ENCODE measurements at regions of chr10 and their contacts with region 1.

Region 1: GRCh38 chr10:102420810-102421644 is at the start of gene FBXL15:
- DNase-seq: peak; percentile 99
- H3K4me3 Mint-ChIP-seq: peak within 1 kb of the TSS; percentile 96
- H3K27ac Mint-ChIP-seq: peak within 1 kb of the TSS; percentile 95
- H3K4me1 Mint-ChIP-seq: peaks cover 26% of the 10 kb centered on the region
- H3K27me3 Mint-ChIP-seq: peaks cover 20% of the 10 kb centered on the region
- total RNA-seq, gene FBXL15: 14.0 and 16.4 TPM in 2 replicates

Region 2: DNA sequence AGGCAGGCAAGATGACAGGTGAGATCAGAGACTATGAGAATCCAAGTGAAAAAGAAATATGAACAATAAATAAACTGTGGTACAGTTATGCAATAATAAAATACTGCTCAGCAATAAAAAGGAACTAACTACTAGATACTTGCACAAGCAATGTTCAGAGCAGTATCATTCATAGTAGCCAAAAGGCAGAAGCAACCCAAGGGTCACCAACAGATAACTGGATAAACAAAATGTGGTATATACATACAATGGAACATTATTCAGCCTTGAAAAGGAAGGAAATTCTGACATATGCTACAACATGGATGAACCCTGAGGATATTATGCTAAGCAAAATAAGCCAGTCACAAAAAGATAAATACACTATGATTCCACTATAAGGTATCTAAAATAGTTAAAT is 500.5 kb before region 1 on chr10:
- intact Hi-C with region 1: no loop called
- DNase-seq: no peak
- H3K4me3 Mint-ChIP-seq: no peak overlapping the region
- H3K27ac Mint-ChIP-seq: no peak overlapping the region
- H3K4me1 Mint-ChIP-seq: peaks cover 16% of the 10 kb centered on the region
- H3K27me3 Mint-ChIP-seq: no peaks in the 10 kb centered on the region

Region 3: DNA sequence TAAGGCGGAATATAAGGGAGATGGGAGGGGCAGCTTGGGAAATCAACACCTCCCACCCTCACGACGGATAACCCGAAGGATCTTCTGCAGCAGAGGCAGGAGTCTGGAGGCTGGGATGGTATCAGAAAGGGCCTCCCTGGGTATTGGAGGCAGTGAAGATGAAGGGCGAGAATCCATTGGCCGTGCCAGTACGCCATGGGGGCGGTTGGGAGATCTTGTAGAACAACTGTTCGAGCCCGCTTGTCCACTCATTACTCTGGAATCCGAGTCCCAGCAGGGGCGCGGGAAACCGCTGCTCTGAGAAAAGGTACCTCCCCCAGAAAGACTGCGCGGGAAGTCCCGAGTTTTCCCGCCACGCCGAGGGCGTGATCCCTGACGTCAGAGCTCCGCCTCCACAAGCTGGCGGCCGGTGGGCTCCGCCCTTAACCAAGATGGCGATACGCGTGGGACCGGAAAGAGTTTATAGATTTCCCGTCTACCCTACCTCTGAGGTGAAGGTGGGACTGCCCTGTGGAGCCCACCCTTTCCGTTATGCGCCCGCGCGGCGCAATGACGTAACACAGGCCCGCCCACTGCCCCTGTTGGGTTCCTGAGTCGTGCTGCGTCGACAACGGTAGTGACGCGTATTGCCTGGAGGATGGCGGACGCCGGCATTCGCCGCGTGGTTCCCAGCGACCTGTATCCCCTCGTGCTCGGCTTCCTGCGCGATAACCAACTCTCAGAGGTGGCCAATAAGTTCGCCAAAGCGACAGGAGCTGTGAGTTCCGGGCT is 269.1 kb before region 1 on chr10 and contains the start of gene NOLC1:
- intact Hi-C with region 1: loop called (anchors 1 kb)
- DNase-seq: peak; percentile 100
- H3K4me3 Mint-ChIP-seq: peak within 1 kb of the TSS; percentile 99
- H3K27ac Mint-ChIP-seq: peak within 1 kb of the TSS; percentile 99
- H3K4me1 Mint-ChIP-seq: peaks cover 45% of the 10 kb centered on the region
- H3K27me3 Mint-ChIP-seq: peaks cover 2% of the 10 kb centered on the region
- total RNA-seq, gene NOLC1: 268 and 281 TPM in 2 replicates

Region 4: DNA sequence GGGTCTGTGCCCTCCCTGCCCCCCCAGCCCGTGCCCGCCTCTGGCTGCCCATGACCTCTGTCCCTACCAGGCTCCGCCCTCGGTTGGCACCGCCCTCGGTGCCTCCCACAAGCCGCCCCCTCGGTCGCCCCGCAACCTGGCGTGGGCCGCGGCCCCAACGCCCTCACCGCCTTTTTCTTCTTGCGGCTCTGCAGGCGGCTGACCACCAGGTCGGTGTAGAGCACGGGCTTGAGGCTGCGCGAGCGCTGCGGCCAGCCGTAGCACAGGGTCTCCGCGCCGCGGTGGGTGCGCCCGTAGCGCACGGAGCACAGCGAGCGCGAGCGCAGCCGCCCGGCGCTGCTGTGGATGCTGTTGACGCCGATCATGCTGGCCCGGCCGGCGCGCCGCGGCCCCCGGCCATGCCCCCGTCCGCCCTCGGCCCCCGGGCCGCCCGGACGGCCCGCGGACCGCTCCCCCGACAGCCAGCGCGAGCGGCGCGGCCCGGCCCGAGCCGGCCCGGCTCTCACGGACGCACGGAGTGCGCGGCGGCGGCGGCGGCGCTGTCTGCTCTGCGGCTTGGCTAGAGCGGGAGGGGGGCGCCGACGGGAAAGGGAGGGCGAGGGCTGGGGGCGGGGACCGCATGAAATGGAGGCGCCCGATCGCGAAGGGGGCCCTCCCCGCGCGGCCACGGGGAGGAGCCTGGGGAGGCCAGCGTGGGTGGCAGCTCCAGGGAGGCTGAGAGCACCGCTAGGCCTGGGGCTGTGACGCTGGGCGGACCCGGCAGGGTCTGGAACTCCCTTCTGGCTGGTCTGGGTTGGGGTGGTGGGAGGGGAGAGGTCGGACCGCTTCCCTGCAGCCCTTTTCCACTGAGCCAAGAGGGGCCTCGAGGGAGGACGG is 12.1 kb before region 1 on chr10:
- intact Hi-C with region 1: loop called (anchors 1 kb)
- DNase-seq: peak; percentile 91
- H3K4me3 Mint-ChIP-seq: peak overlapping the region; percentile 94
- H3K27ac Mint-ChIP-seq: peak overlapping the region; percentile 89
- H3K4me1 Mint-ChIP-seq: peaks cover 43% of the 10 kb centered on the region
- H3K27me3 Mint-ChIP-seq: peaks cover 23% of the 10 kb centered on the region

Region 5: DNA sequence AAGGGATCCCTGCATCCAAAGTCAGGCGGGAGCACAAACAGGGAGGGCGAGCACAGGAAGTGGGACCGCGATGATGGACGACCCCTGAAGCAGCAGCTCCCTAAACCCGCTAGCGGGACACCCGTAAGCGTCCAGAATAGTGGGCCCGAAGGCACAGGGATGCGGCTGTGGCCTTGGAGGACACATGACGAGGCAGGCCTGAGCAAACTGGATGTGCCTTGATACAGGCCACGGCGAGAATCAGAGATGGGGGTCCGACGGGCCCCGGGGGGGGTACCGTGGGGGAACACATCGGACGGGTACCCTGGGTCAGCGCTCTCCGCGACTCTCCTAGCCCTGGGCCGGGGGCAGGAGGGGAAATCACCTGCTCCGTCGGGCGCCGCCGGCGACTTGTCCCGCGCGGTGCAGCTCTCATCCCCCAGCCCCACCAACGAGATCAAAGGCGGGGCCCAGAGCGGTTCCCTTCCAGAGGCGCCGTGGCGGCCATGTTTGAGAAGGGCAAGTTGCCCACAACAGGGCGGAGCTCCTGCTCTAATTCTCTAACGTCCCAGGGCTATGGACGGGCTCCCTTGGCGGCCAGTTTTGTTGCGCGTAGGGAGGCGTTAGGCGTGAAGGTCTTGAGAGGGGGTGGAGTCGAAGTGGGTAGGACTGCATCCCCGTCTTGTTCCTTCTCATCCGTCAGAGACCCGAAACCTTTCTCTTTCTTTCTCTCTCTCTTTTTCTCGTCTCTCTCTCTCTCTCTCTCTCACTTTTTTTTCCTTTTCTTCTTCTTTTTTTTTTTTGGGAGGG is 11.3 kb after region 1 on chr10 and contains the start of gene CUEDC2:
- intact Hi-C with region 1: loop called (anchors 1 kb)
- DNase-seq: peak; percentile 100
- H3K4me3 Mint-ChIP-seq: peak within 1 kb of the TSS; percentile 85
- H3K27ac Mint-ChIP-seq: peak within 1 kb of the TSS; percentile 81
- H3K4me1 Mint-ChIP-seq: peaks cover 48% of the 10 kb centered on the region
- H3K27me3 Mint-ChIP-seq: no peaks in the 10 kb centered on the region
- total RNA-seq, gene CUEDC2: 64.2 and 67.6 TPM in 2 replicates

Region 6: GRCh38 chr10:102450194-102450938 is 29.3 kb after region 1 on chr10:
- intact Hi-C with region 1: loop called (anchors 1 kb)
- DNase-seq: peak; percentile 97
- H3K4me3 Mint-ChIP-seq: peak overlapping the region; percentile 98
- H3K27ac Mint-ChIP-seq: peak overlapping the region; percentile 97
- H3K4me1 Mint-ChIP-seq: peaks cover 29% of the 10 kb centered on the region
- H3K27me3 Mint-ChIP-seq: no peaks in the 10 kb centered on the region

Region 7: GRCh38 chr10:102476466-102477141 is 55.6 kb after region 1 on chr10:
- intact Hi-C with region 1: loop called (anchors 1 kb)
- DNase-seq: no peak
- H3K4me3 Mint-ChIP-seq: no peak overlapping the region
- H3K27ac Mint-ChIP-seq: peak overlapping the region; percentile 70
- H3K4me1 Mint-ChIP-seq: peaks cover 22% of the 10 kb centered on the region
- H3K27me3 Mint-ChIP-seq: no peaks in the 10 kb centered on the region

Measured in activated CD4-positive, alpha-beta T cell treated with anti-CD3 and anti-CD28 coated beads, Interleukin-2, amount 10 ng/mL, durations not matched to agents 24 days and 14 days (primary cell).